Activated CD4-positive, alpha-beta T cell treated with anti-CD3 and anti-CD28 coated beads, Interleukin-2, amount 10 ng/mL, durations not matched to agents 24 days and 14 days (primary cell): ENCODE measurements at regions of chr11 and their contacts with region 1.

Region 1: GRCh38 chr11:93543292-93543977 is at the start of gene SMCO4:
- DNase-seq: peak; percentile 92
- H3K4me3 Mint-ChIP-seq: peak within 1 kb of the TSS; percentile 92
- H3K27ac Mint-ChIP-seq: peak within 1 kb of the TSS; percentile 87
- H3K4me1 Mint-ChIP-seq: peaks cover 30% of the 10 kb centered on the region
- H3K27me3 Mint-ChIP-seq: peaks cover 3% of the 10 kb centered on the region
- total RNA-seq, gene SMCO4: 30.0 and 33.7 TPM in 2 replicates

Region 2: DNA sequence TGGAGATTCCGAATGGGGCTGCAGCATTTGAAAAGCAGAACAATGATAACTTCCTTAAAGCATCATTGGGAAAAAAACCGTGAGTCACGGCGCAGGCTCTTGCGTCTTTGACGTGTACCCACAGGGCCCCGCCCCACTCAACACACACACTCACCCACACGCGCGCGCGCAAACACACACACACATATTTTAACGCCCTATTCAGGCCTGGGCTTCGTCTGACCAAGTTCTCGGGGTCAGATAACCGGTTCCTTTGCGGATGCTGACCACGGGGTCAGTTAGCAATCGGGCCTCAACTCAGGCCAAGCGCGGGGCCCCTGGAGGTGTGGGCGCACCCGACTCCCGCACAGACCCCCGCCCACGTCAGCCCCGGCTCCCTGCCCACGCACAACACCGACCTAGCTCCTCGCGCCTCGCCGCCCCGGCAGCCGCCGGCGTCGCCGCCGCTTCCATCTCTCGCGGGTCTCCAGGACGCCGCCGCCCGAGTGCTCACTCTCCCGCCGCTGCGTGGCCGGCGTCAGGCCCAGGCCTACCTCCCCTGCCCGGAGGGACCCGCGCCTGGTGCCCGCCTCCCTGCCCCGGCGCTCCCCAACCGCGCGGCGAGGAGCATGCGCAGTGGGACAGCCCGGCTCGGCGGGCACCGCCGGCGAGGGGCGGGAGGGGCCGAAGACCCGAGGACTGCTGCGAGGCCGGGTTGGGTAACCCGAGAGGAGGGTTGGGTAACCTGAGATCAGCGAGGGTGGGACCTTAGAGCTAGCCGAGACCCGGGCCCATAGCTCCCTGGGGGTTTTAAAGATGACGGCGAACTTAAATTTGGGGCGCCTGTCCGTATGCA is 345.8 kb before region 1 on chr11 and contains the start of gene SLC36A4:
- intact Hi-C with region 1: loop called (anchors 2 kb)
- DNase-seq: peak; percentile 96
- H3K4me3 Mint-ChIP-seq: peak within 1 kb of the TSS; percentile 86
- H3K27ac Mint-ChIP-seq: peak within 1 kb of the TSS; percentile 87
- H3K4me1 Mint-ChIP-seq: peaks cover 13% of the 10 kb centered on the region
- H3K27me3 Mint-ChIP-seq: peaks cover 19% of the 10 kb centered on the region
- total RNA-seq, gene SLC36A4: 14.7 and 16.1 TPM in 2 replicates

Region 3: GRCh38 chr11:93234602-93235207 is 308.7 kb before region 1 on chr11:
- intact Hi-C with region 1: loop called (anchors 1 kb)
- DNase-seq: peak; percentile 92
- H3K4me3 Mint-ChIP-seq: no peak overlapping the region
- H3K27ac Mint-ChIP-seq: no peak overlapping the region
- H3K4me1 Mint-ChIP-seq: no peaks in the 10 kb centered on the region
- H3K27me3 Mint-ChIP-seq: peaks cover 30% of the 10 kb centered on the region

Region 4: GRCh38 chr11:93476796-93477195 is 66.6 kb before region 1 on chr11:
- intact Hi-C with region 1: no loop called
- DNase-seq: no peak
- H3K4me3 Mint-ChIP-seq: no peak overlapping the region
- H3K27ac Mint-ChIP-seq: no peak overlapping the region
- H3K4me1 Mint-ChIP-seq: no peaks in the 10 kb centered on the region
- H3K27me3 Mint-ChIP-seq: no peaks in the 10 kb centered on the region

Region 5: GRCh38 chr11:93500759-93501158 is 42.7 kb before region 1 on chr11:
- intact Hi-C with region 1: loop called (anchors 5 kb)
- DNase-seq: no peak
- H3K4me3 Mint-ChIP-seq: no peak overlapping the region
- H3K27ac Mint-ChIP-seq: no peak overlapping the region
- H3K4me1 Mint-ChIP-seq: peaks cover 4% of the 10 kb centered on the region
- H3K27me3 Mint-ChIP-seq: no peaks in the 10 kb centered on the region

Region 6: DNA sequence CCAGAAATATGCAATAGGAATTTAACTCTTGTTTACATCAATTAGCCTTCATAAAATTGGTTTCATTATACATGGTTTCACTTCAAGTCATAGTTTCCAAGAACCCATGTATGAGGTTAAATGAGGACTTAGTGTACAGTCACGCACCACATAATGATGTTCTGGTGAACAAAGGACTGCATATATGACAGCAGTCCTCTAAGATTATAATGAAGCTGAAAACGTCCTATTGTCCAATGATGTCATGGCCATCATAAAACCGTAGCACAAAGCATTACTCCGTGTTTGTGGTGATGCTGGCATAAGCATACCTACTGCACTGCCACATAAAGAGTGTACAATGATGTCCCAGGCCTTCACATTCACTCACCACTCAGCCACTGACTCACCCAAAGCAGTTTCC is 31.4 kb before region 1 on chr11:
- intact Hi-C with region 1: loop called (anchors 1 kb)
- DNase-seq: peak; percentile 73
- H3K4me3 Mint-ChIP-seq: peak overlapping the region; percentile 63
- H3K27ac Mint-ChIP-seq: peak overlapping the region; percentile 89
- H3K4me1 Mint-ChIP-seq: peaks cover 33% of the 10 kb centered on the region
- H3K27me3 Mint-ChIP-seq: no peaks in the 10 kb centered on the region

Region 7: DNA sequence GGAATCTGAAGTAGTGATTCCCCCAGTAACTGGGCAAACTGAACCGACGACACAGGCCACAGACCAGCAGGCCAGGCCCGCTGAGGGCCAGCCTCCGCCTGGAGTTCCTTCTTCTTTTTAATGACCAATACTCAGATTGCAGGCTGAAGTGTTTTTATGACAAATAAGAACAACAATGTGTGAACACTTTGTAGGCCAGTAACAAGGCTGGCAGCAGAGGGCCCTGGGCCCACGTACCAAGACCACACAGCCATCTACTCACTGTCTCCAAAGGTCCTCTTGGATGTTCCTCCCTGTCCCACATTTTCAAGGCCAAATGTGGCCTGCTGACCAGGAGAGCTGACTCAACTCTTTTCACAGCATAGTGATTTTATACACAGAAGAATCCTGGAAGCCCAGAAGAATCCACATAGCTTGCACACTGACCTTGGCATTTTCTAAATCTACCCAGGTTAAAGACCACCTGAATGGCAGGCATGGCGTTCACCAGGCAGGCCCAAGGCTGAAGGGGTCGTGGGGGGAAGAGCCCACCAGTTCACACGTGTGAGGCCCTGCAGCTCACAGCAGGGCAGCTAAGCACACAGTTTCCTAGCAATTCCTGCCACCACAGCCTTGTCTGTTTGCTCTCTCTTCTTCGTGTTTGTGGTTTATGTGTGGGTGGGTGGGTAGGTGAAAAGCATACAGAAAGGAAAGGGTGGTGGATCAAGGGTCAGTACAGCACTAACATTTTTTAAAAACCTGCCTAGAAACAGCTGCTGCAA is 13.5 kb before region 1 on chr11:
- intact Hi-C with region 1: loop called (anchors 1 kb)
- DNase-seq: peak; percentile 74
- H3K4me3 Mint-ChIP-seq: peak overlapping the region; percentile 56
- H3K27ac Mint-ChIP-seq: peak overlapping the region; percentile 82
- H3K4me1 Mint-ChIP-seq: peaks cover 71% of the 10 kb centered on the region
- H3K27me3 Mint-ChIP-seq: no peaks in the 10 kb centered on the region

Region 8: DNA sequence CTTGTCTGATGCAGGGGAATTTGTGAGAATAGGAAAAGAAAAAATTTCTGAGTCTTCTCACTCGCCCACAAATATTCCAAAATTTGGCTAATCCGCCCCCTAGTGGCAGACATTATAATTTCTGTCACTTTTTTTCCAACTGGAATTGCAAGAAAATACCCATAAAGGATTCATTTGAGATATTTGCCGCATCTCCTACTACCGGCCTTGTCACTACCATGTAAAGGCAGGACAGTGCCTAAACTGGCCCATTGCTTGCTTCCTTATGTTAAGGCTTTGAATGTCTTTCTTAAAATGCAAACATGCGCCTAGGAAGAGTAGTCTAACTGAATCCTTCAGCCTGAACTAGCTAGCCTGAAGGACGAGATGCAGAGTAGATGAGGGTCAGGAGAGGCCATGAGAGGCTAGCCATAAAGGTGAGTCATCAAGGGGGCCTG is 108.7 kb after region 1 on chr11:
- intact Hi-C with region 1: loop called (anchors 5 kb)
- DNase-seq: peak; percentile 80
- H3K4me3 Mint-ChIP-seq: no peak overlapping the region
- H3K27ac Mint-ChIP-seq: no peak overlapping the region
- H3K4me1 Mint-ChIP-seq: peaks cover 13% of the 10 kb centered on the region
- H3K27me3 Mint-ChIP-seq: peaks cover 22% of the 10 kb centered on the region